Colonic mucosa (tissue), 4 donors: ENCODE measurements at regions of chr13 and their contacts with region 1.

Region 1: DNA sequence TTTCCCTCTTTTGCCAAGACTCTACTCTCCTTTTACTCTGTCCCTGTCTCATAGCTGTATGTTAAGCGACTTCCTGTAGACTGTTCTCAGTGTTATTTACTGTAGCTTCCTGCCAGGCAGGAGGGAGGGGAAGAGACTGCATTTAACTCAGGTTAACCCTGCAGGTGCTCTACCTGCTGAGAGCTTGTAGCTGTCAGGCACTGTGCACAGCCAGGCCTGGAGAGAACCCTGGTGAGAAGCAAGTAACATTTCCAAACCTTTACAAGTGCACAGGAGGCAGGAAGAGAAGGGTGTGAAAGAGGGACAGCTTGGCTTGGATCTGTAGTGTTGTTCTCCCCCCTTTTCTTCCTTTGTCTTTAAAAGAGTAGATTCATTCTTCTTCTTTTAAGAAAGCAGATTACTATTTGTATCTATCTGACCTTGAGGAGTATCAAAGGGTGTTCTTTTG is 167.1 kb downstream of the LMO7 start:
- DNase-seq: peak; percentile 44
- H3K4me3 ChIP-seq: no peak overlapping the region
- H3K27ac ChIP-seq: peak overlapping the region; percentile 56
- H3K4me1 ChIP-seq: no peaks in the 10 kb centered on the region
- H3K27me3 ChIP-seq: no peaks in the 10 kb centered on the region
- CTCF ChIP-seq: no peak

Region 2: DNA sequence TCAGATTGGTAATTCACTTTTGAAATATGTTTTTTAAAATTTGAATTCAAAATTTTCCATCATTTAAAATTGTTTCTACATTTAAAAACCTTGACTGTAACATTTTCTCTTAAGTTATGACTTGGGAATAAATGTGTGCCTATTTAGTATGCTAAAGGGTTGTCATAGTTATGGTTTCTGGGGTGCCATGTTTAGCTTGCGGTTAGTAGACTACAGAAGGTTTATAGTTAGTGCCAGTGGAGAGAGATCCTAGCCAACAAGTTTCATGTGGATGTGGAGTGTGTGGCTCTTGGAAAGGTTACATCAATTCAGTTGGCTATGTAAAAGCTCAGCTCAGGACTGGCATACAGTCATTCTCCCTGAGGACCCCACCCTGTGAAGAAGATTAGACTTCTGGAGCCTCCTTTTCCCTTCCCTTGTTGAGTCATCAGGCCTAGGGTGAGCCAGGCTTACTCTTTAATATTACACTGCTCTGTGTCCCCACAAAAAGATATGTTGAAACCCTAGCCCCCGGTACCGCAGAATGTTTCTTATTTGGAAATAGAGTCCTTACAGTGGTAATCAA is 146.7 kb before region 1 on chr13:
- intact Hi-C with region 1: no loop called
- DNase-seq: no peak
- H3K4me3 ChIP-seq: no peak overlapping the region
- H3K27ac ChIP-seq: no peak overlapping the region
- H3K4me1 ChIP-seq: no peaks in the 10 kb centered on the region
- H3K27me3 ChIP-seq: no peaks in the 10 kb centered on the region
- CTCF ChIP-seq: no peak

Region 3: DNA sequence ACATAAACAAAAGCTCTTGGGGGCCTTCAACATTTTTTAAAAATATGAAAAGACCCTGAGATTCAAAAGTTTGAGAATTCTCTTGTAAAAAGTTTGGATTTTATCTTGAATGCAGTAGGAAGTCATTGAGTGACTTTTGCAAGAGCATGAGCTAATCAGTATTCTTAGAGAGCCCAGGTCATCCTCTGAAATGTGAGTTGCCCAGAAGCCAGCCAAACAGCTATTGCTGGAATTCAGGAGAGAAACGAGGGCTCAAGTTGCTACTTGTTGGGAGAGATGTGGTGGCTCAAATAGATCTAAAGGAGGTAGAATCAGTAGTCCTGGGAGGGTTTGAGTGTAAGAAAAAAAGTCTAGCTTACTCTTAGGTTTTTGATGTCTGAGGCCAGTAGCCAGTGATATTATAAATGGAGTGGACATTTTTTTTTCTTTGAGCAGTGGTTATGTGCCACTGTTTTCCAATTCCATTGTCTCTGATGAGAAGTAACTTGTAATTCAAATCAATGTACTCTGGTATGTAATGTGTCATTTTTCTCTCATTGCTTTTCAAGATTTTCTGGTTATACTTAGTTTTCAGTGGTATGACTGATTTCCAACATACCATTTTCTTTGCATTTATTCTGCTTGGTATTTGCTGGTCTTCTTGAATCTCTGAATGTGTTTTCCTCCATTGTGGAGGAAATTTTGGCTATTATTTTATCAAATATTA is 136.4 kb before region 1 on chr13:
- intact Hi-C with region 1: no loop called
- DNase-seq: no peak
- H3K4me3 ChIP-seq: no peak overlapping the region
- H3K27ac ChIP-seq: no peak overlapping the region
- H3K4me1 ChIP-seq: no peaks in the 10 kb centered on the region
- H3K27me3 ChIP-seq: no peaks in the 10 kb centered on the region
- CTCF ChIP-seq: no peak

Region 4: DNA sequence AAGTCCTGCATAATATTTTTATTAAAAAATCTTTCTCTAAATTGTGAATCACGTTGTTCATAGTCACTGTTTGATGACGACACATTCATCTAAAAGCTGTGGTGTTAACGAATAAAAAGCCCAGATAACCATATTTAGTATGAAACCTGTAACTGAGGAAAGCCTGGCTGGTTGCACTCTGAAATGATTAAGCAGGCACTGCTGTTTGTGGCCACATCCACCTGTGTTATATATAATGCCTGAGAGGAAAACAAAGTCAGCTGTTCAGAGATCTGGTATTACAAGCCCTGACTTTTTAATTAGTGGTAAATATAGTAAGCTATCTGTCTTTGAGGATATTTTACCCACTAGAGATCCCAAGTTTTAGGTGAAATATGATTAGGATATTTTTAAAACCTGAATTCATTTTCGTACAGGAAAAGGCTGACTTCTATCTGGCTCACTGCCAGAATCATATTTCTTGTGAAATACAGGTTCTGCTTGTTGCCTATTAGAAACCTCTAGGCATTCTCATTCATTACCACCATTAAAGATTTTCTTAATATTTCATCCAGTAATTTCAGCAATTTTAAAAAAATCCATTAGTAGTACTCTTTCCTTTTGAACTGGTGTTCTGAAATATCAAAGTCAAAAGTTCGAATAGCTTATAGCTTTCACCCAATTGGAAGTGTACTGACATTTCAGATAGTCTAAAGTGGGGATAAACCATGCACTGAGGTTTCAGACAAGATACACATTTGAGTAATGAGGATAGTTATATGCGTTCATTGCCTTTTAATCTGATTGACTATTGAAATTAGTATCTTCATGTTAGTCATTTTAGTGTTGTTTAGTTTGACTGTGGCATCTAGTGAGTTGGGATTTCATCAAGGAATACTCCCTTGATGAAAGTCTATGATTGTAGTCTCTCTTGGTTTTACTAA is 87.3 kb before region 1 on chr13:
- intact Hi-C with region 1: no loop called
- DNase-seq: no peak
- H3K4me3 ChIP-seq: no peak overlapping the region
- H3K27ac ChIP-seq: no peak overlapping the region
- H3K4me1 ChIP-seq: no peaks in the 10 kb centered on the region
- H3K27me3 ChIP-seq: no peaks in the 10 kb centered on the region
- CTCF ChIP-seq: no peak

Region 5: GRCh38 chr13:75760131-75761021 is 42.8 kb before region 1 on chr13:
- intact Hi-C with region 1: loop called (anchors 2 kb)
- DNase-seq: peak; percentile 81
- H3K4me3 ChIP-seq: peak overlapping the region; percentile 30
- H3K27ac ChIP-seq: peak overlapping the region; percentile 80
- H3K4me1 ChIP-seq: no peaks in the 10 kb centered on the region
- H3K27me3 ChIP-seq: no peaks in the 10 kb centered on the region
- CTCF ChIP-seq: no peak